Activated CD8-positive, alpha-beta T cell treated with anti-CD3 and anti-CD28 coated beads for 36 hours (primary cell): ENCODE measurements at regions of chr16 and their contacts with region 1.

Region 1: GRCh38 chr16:19502395-19503131 is 19.3 kb downstream of the GDE1 start:
- DNase-seq: peak; percentile 83
- ATAC-seq: peak; percentile 42
- H3K4me3 Mint-ChIP-seq: no peak overlapping the region
- H3K27ac Mint-ChIP-seq: no peak overlapping the region
- H3K4me1 Mint-ChIP-seq: no peaks in the 10 kb centered on the region
- H3K27me3 Mint-ChIP-seq: no peaks in the 10 kb centered on the region
- CTCF ChIP-seq: peak; percentile 74

Region 2: GRCh38 chr16:19389246-19389645 is 113.3 kb before region 1 on chr16:
- CTCF ChIA-PET with region 1: interaction called, 34 read pairs
- POLR2A ChIA-PET with region 1: interaction called, 3 read pairs
- intact Hi-C with region 1: loop called (anchors 5 kb)
- DNase-seq: peak; percentile 70
- ATAC-seq: peak; percentile 49
- H3K4me3 Mint-ChIP-seq: no peak overlapping the region
- H3K27ac Mint-ChIP-seq: no peak overlapping the region
- H3K4me1 Mint-ChIP-seq: no peaks in the 10 kb centered on the region
- H3K27me3 Mint-ChIP-seq: peaks cover 11% of the 10 kb centered on the region
- CTCF ChIP-seq: peak; percentile 51

Region 3: DNA sequence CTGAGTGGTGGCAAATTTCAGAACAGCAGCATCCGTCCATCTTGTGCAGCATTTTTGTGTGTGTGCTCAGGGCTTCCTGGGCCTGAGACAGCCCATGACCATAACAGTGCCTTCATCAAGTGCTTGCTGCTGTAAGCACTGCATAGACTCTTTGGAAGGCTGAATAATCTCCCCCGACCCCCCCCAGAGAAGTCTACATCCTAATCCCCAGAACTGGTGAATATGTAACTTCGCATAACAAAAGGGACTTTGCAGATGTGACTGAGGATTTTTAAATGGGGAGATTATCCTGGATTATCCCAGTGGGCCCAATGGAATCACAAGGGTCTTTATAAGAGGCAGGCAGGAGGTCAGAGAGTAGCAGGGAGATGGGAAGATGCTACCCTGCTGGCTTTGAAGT is 34.3 kb before region 1 on chr16:
- CTCF ChIA-PET with region 1: no interaction called
- POLR2A ChIA-PET with region 1: no interaction called
- intact Hi-C with region 1: no loop called
- DNase-seq: no peak
- ATAC-seq: no peak
- H3K4me3 Mint-ChIP-seq: no peak overlapping the region
- H3K27ac Mint-ChIP-seq: no peak overlapping the region
- H3K4me1 Mint-ChIP-seq: no peaks in the 10 kb centered on the region
- H3K27me3 Mint-ChIP-seq: peaks cover 2% of the 10 kb centered on the region
- CTCF ChIP-seq: no peak

Region 4: GRCh38 chr16:19517418-19518089 is 15.0 kb after region 1 on chr16:
- CTCF ChIA-PET with region 1: interaction called, 23 read pairs
- POLR2A ChIA-PET with region 1: no interaction called
- intact Hi-C with region 1: no loop called
- DNase-seq: peak; percentile 29
- ATAC-seq: no peak
- H3K4me3 Mint-ChIP-seq: no peak overlapping the region
- H3K27ac Mint-ChIP-seq: no peak overlapping the region
- H3K4me1 Mint-ChIP-seq: peaks cover 46% of the 10 kb centered on the region
- H3K27me3 Mint-ChIP-seq: no peaks in the 10 kb centered on the region
- CTCF ChIP-seq: no peak